Endothelial cell of umbilical vein (primary cell): ENCODE measurements at regions of chr5 and their contacts with region 1.

Region 1: GRCh38 chr5:72280581-72281170 is 39.4 kb downstream of the MRPS27 start:
- DNase-seq: peak; percentile 60
- H3K4me3 ChIP-seq: no peak overlapping the region
- H3K27ac ChIP-seq: no peak overlapping the region
- H3K4me1 ChIP-seq: peaks cover 18% of the 10 kb centered on the region
- H3K27me3 ChIP-seq: no peaks in the 10 kb centered on the region
- CTCF ChIP-seq: peak; percentile 32 to 51
- POLR2A ChIP-seq: no peak

Region 2: DNA sequence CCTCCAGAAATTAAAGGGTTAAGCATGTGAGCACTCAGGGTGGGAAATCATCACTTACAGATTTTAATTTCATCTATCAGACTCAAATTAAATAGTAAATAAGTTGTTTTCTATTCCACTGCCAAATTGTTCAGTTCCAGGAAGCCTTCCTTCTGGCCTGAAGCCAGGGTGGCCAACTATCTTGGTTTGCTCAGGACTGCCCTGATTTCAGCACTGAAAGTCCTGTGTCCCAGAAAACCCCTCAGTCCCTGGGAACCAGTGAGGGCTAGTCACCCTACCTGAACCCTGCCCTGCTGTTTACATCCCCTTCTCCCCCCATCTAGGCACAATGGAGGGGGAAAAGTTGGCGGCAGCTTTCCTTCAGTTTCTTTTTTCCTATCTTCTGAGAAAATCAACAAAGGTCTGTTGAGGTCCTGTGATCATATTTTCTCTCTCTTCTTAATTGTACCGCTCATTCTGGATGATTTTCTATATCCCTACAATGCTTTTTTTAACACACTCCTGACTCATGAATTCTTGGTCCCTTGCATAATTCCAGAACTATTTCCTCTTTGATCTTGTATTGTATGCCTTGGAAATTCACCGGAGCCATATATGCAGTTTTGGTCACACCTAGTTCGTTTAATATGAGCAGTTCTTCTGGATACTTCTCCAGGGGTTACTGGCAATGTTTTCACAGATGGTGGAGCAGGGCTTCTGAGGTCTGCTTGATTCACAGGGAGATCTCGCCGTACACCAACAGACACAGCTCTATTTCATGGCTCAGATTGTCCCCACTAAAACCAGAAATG is 69.6 kb before region 1 on chr5:
- CTCF ChIA-PET with region 1: interaction called, 11 read pairs
- POLR2A ChIA-PET with region 1: no interaction called
- dilution Hi-C with region 1: no loop called
- intact Hi-C with region 1: no loop called
- DNase-seq: peak; percentile 93
- H3K4me3 ChIP-seq: peak overlapping the region in 1 of 3 experiments; percentile 26
- H3K27ac ChIP-seq: peak overlapping the region; percentile 97
- H3K4me1 ChIP-seq: peaks cover 38% of the 10 kb centered on the region
- H3K27me3 ChIP-seq: no peaks in the 10 kb centered on the region
- CTCF ChIP-seq: no peak
- POLR2A ChIP-seq: peak; percentile 31

Region 3: GRCh38 chr5:72234265-72234700 is 46.4 kb before region 1 on chr5:
- CTCF ChIA-PET with region 1: interaction called, 12 read pairs
- POLR2A ChIA-PET with region 1: no interaction called
- dilution Hi-C with region 1: no loop called
- intact Hi-C with region 1: no loop called
- DNase-seq: peak; percentile 89
- H3K4me3 ChIP-seq: no peak overlapping the region
- H3K27ac ChIP-seq: peak overlapping the region; percentile 78
- H3K4me1 ChIP-seq: peaks cover 43% of the 10 kb centered on the region
- H3K27me3 ChIP-seq: no peaks in the 10 kb centered on the region
- CTCF ChIP-seq: no peak
- POLR2A ChIP-seq: no peak

Region 4: GRCh38 chr5:72255237-72255636 is 25.4 kb before region 1 on chr5:
- CTCF ChIA-PET with region 1: interaction called, 11 read pairs
- POLR2A ChIA-PET with region 1: interaction called, 3 read pairs
- dilution Hi-C with region 1: no loop called
- intact Hi-C with region 1: no loop called
- DNase-seq: peak; percentile 79
- H3K4me3 ChIP-seq: no peak overlapping the region
- H3K27ac ChIP-seq: peak overlapping the region; percentile 69
- H3K4me1 ChIP-seq: peaks cover 66% of the 10 kb centered on the region
- H3K27me3 ChIP-seq: no peaks in the 10 kb centered on the region
- CTCF ChIP-seq: no peak
- POLR2A ChIP-seq: no peak

Region 5: GRCh38 chr5:72441861-72442540 is 161.3 kb after region 1 on chr5:
- CTCF ChIA-PET with region 1: no interaction called
- POLR2A ChIA-PET with region 1: no interaction called
- dilution Hi-C with region 1: no loop called
- intact Hi-C with region 1: no loop called
- DNase-seq: peak; percentile 88
- H3K4me3 ChIP-seq: no peak overlapping the region
- H3K27ac ChIP-seq: peak overlapping the region; percentile 69
- H3K4me1 ChIP-seq: peaks cover 20% of the 10 kb centered on the region
- H3K27me3 ChIP-seq: no peaks in the 10 kb centered on the region
- CTCF ChIP-seq: no peak
- POLR2A ChIP-seq: no peak

Region 6: DNA sequence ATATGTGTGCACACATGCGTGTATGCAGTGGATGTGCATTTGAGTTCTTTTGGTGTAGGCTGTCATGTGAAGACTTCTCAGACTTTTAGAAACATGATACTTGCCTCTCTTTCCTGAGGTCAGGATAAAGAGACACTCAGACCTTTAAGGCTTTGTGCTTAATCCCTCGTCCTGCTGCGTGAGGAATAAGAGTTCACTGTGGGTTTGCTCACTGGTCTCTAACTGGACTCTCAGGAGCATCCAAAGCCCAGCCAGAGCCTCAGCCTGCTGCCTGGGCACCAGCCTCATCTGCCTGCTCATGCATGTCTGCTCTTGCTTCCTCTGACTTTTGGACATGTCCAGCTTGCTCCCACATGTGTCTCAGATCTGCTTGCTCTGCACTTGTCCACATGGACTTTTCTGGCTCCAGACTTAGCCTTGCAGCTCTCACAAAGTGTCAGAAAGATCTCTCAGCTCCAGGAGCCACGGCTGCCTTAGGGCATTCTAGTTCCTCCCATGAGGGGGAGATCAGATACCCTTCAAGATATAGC is 291.6 kb after region 1 on chr5:
- CTCF ChIA-PET with region 1: no interaction called
- POLR2A ChIA-PET with region 1: no interaction called
- dilution Hi-C with region 1: no loop called
- intact Hi-C with region 1: no loop called
- DNase-seq: no peak
- H3K4me3 ChIP-seq: no peak overlapping the region
- H3K27ac ChIP-seq: no peak overlapping the region
- H3K4me1 ChIP-seq: peaks cover 4% of the 10 kb centered on the region
- H3K27me3 ChIP-seq: no peaks in the 10 kb centered on the region
- CTCF ChIP-seq: no peak
- POLR2A ChIP-seq: no peak